ENCODE measurements at regions of chr16 and their contacts with region 1.

Region 1: DNA sequence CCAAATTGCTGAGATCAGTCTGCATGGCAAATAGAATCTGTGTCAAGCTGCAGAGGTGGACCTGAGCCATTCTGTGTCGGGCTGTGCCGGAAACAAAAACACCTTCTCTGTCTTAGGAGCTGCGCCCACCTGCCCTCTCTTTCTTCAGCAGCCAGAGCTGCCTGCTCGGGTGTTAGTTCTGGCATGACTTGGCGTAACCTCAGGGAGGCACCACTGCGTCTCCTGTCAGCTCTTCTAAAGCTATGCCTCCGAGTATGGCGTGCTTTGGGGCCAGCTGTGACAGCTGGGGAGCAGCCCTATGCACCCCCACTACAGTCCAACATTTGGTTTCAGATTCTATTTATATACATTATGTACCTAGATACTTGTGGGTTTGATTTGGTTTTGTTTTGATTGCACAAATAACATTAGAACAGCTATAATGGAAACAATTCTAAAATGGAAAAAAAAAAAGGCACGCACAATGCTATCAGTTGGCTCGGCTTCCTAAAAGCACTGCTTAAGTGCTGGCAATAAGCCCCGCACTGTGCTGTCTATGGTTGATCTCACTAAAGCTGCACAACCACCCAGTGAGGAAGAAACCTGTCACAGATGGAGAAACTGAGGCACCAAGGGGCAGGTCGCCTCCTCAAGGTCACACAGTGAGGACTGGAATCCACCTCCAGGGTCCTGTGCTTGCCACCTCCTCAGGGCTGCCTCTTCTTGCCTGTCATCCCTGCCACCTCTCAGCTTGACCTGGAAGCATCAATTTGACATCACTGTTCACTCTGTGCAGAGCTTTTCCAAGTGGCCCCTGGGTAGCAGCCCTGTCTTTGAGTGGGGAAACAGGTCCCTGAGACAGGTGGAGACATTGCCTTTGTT is 18.7 kb upstream of the ADGRG1 start:
- DNase-seq: peak; percentile 85
- CTCF ChIP-seq: peak; percentile 47

Region 2: GRCh38 chr16:57639172-57639887 is 29.6 kb after region 1 on chr16:
- CTCF ChIA-PET with region 1: interaction called, 10 read pairs
- POLR2A ChIA-PET with region 1: interaction called, 3 read pairs
- DNase-seq: no peak
- CTCF ChIP-seq: no peak

Region 3: DNA sequence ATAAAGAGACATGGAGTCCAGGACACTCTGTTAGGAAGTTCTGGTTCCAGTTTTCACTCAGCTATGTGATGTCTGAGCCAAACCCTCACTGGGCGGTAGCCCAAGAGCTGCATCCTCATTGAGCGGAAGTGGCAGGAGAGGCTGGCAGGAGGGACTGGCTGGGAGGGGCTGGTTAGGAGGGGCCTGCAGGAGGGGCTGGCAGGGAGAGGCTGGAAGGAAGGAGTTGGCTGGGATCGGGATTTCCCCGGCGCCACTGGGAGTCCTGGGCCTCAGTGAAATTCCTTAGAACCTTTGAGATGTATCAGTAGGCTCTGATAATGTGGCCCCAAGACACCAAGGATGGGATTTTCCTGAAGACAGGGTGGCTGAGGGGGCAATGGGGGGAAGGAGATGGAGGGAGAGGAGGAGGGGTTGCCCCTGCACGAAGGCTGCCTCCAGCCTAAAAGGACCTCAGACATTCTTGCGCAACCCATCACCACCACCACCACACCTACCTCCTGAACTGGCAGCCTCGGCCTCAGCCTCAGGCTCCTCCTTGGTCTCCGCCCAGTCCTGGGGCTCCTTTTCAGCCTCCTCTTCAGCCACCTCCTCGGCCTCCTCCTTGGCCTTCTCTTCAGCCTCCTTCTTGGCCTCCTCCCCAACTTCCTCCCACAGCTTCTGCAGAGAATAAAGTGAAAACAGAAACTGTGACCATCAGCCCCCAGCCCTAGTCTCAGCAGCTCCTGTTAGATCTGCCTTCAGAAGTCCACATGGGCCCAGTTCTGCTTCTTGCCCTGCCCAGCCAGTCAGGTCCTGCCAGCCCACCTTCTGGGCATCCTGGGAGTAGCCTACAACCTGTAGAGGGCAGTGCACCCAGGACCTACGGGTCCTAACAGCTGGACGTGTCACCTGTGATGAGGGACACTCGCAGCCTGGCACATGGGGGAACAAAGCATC is 329.4 kb after region 1 on chr16:
- CTCF ChIA-PET with region 1: no interaction called
- POLR2A ChIA-PET with region 1: no interaction called
- DNase-seq: no peak
- CTCF ChIP-seq: no peak